Naive thymus-derived CD4-positive, alpha-beta T cell (primary cell): ENCODE measurements at regions of chr11 and their contacts with region 1.

Region 1: DNA sequence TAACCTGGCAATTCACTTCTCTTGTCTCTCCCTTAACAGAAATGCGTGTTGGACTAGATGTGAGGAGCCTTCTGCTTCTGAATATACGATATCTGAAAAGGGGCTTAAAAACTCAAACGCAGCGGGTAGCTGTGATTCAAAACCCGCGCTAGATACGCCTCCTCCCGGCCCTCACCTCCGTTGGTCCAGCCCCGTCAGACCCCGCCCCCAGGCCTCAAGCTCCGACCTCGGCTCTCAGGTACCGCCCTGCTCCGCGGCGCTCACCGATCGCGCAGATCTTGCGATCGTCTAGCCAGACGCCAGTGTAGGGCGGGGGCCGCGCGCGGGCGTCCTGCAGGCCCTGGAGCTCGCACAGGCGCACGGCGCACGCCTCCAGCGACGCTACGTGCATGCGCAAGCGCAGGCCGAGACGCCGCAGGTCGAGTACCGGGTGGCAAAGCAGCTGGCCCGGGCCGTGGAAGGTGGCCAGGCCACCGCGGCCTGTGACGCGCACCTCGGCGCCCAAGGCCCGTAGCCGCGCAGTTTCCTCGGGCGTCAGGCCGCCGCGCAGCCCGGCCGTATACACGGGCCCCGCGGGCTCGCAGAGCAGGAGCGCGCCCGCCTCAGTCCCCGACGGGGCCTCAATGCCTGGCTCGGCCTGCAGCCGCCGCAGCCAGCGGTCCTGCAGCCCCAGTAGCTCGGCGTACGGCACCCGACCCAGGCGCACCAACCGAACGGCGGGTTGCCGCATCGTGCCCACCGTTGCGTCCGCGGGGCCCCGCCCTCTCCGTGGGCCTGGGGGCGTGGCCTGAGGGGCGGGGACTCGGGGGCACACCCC is at the start of gene LIPT2:
- DNase-seq: peak; percentile 92 to 98 (median 96)
- ATAC-seq: peak; percentile 97
- H3K4me3 ChIP-seq: peak within 1 kb of the TSS; percentile 90
- H3K4me3 Mint-ChIP-seq: peak within 1 kb of the TSS; percentile 74 to 92 (median 86)
- H3K27ac ChIP-seq: peak within 1 kb of the TSS; percentile 95
- H3K27ac Mint-ChIP-seq: peak within 1 kb of the TSS; percentile 73 to 96 (median 89)
- H3K4me1 ChIP-seq: peaks cover 8 to 10% of the 10 kb centered on the region in 2 donors
- H3K4me1 Mint-ChIP-seq: peaks cover 14 to 43% (median 28%) of the 10 kb centered on the region in 7 donors
- H3K27me3 ChIP-seq: no peaks in the 10 kb centered on the region
- H3K27me3 Mint-ChIP-seq: no peaks in the 10 kb centered on the region
- total RNA-seq, gene LIPT2: 1.9 to 18.2 (median 9.3) TPM

Region 2: GRCh38 chr11:73779084-73779902 is 713.9 kb before region 1 on chr11:
- CTCF ChIA-PET with region 1: no interaction called
- POLR2A ChIA-PET with region 1: interaction called, 3 read pairs
- intact Hi-C with region 1: loop called in 1 of 2 experiments (anchors 1 kb)
- DNase-seq: peak; percentile 88 to 98 (median 97)
- ATAC-seq: peak; percentile 99
- H3K4me3 ChIP-seq: peak overlapping the region; percentile 58
- H3K4me3 Mint-ChIP-seq: peak overlapping the region; percentile 86 to 97 (median 94)
- H3K27ac ChIP-seq: peak overlapping the region; percentile 89
- H3K27ac Mint-ChIP-seq: peak overlapping the region; percentile 94 to 100 (median 100)
- H3K4me1 ChIP-seq: peaks cover 0 to 6% of the 10 kb centered on the region in 2 donors
- H3K4me1 Mint-ChIP-seq: peaks cover 2 to 18% (median 9%) of the 10 kb centered on the region in 7 donors
- H3K27me3 ChIP-seq: no peaks in the 10 kb centered on the region
- H3K27me3 Mint-ChIP-seq: peaks cover 0 to 6% (median 0%) of the 10 kb centered on the region in 5 donors

Region 3: DNA sequence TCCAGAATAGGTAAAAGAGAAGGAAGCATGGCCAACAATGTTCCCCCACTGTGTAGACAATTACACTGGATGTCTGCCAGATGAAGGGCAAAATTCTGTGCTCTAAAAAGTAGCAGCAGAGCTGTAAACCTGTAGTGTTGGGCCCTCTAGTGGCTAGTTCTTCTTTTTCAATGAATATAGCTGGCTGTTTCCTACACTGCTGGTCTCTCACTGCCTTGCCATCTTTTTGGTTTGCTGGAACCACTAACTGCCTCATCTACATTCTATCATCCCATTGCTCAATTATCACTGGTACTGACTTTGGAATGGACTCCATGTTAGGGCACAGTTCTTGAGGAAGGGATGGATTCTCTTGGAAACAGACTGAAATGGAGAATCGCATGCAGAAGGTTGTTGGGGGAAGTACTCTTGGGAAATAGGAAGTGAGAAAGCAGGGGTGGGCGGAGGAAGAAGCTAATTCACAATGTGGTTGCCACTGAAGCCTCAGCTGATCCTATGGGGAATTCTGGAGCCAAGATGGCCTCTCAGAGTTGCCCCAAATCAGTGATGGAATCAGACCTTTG is 43.7 kb before region 1 on chr11:
- CTCF ChIA-PET with region 1: interaction called, 10 read pairs
- POLR2A ChIA-PET with region 1: interaction called, 3 read pairs
- intact Hi-C with region 1: loop called in 1 of 2 experiments (anchors 1 kb)
- DNase-seq: peak in 7 of 9 donors; percentile 56 to 77 (median 67)
- ATAC-seq: peak; percentile 92
- H3K4me3 ChIP-seq: no peak overlapping the region
- H3K4me3 Mint-ChIP-seq: no peak overlapping the region
- H3K27ac ChIP-seq: no peak overlapping the region
- H3K27ac Mint-ChIP-seq: peak overlapping the region in 1 of 9 donors; percentile 56
- H3K4me1 ChIP-seq: no peaks in the 10 kb centered on the region
- H3K4me1 Mint-ChIP-seq: peaks cover 0 to 6% (median 5%) of the 10 kb centered on the region in 7 donors
- H3K27me3 ChIP-seq: no peaks in the 10 kb centered on the region
- H3K27me3 Mint-ChIP-seq: peaks cover 0 to 10% (median 7%) of the 10 kb centered on the region in 5 donors

Region 4: DNA sequence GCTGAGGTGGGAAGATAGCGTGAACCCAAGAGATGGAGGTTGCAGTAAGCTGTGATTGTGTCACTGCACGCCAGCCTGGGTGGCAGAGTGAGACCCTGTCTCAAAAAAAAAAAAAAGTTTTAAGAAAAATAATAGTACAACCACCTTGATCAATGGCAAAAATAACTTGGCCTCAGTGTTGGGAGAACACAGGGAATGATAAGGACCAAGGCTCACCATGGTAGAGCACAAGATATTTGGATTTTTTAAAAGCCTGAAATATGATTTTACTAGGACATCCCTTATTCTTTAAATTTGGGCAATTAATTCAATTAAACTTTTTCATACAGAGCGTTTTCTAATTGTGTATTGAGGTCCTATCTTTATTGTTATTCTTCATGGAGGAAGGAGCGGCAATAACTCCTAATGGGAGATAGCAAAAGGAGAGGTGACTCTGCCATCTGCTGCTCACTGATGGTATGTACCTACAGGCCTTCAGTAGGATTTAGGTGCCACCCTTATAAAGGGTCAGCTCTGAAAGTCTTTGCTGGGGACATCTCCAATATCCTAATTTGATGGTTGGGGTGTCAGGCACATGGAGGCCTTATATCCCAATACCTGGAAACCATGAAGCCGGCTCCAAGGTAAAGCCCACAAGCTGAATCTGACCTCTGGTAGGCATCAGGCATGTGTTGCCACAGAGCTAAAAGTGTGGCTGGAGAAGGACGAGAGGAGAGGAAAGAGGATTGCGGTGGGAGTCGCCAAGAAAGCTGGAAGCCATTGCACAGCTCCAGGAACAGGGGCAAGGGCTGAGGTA is 77.3 kb after region 1 on chr11:
- CTCF ChIA-PET with region 1: interaction called, 4 read pairs
- POLR2A ChIA-PET with region 1: interaction called, 8 read pairs
- intact Hi-C with region 1: loop called in 1 of 2 experiments (anchors 2 kb)
- DNase-seq: peak in 3 of 9 donors; percentile 13 to 16 (median 15)
- ATAC-seq: peak; percentile 65
- H3K4me3 ChIP-seq: no peak overlapping the region
- H3K4me3 Mint-ChIP-seq: no peak overlapping the region
- H3K27ac ChIP-seq: no peak overlapping the region
- H3K27ac Mint-ChIP-seq: no peak overlapping the region
- H3K4me1 ChIP-seq: no peaks in the 10 kb centered on the region
- H3K4me1 Mint-ChIP-seq: no peaks in the 10 kb centered on the region
- H3K27me3 ChIP-seq: no peaks in the 10 kb centered on the region
- H3K27me3 Mint-ChIP-seq: peaks cover 0 to 14% (median 0%) of the 10 kb centered on the region in 5 donors

Region 5: GRCh38 chr11:74748211-74749127 is 255.3 kb after region 1 on chr11 and contains the start of gene RNF169:
- CTCF ChIA-PET with region 1: no interaction called
- POLR2A ChIA-PET with region 1: no interaction called
- intact Hi-C with region 1: loop called (anchors 1 kb)
- DNase-seq: peak; percentile 59 to 88 (median 84)
- ATAC-seq: peak; percentile 100
- H3K4me3 ChIP-seq: peak within 1 kb of the TSS; percentile 73
- H3K4me3 Mint-ChIP-seq: peak within 1 kb of the TSS; percentile 81 to 99 (median 94)
- H3K27ac ChIP-seq: peak within 1 kb of the TSS; percentile 79
- H3K27ac Mint-ChIP-seq: peak within 1 kb of the TSS; percentile 84 to 97 (median 91)
- H3K4me1 ChIP-seq: peaks cover 16 to 29% of the 10 kb centered on the region in 2 donors
- H3K4me1 Mint-ChIP-seq: peaks cover 25 to 48% (median 42%) of the 10 kb centered on the region in 7 donors
- H3K27me3 ChIP-seq: no peaks in the 10 kb centered on the region
- H3K27me3 Mint-ChIP-seq: no peaks in the 10 kb centered on the region
- total RNA-seq, gene RNF169: 17.9 to 25.5 (median 22.2) TPM